AG04450 (cell line): ENCODE measurements at regions of chr7 and their contacts with region 1.

Region 1: GRCh38 chr7:81025360-81025759 is 106.5 kb upstream of the SEMA3C start:
- DNase-seq: no peak
- H3K4me3 ChIP-seq: no peak overlapping the region
- H3K27ac ChIP-seq: no peak overlapping the region
- H3K27me3 ChIP-seq: no peaks in the 10 kb centered on the region
- CTCF ChIP-seq: no peak

Region 2: GRCh38 chr7:80974396-80975334 is 50.7 kb before region 1 on chr7:
- CTCF ChIA-PET with region 1: no interaction called
- POLR2A ChIA-PET with region 1: no interaction called
- DNase-seq: no peak
- H3K4me3 ChIP-seq: no peak overlapping the region
- H3K27ac ChIP-seq: no peak overlapping the region
- H3K27me3 ChIP-seq: no peaks in the 10 kb centered on the region
- CTCF ChIP-seq: no peak

Region 3: GRCh38 chr7:81053623-81054022 is 28.3 kb after region 1 on chr7:
- CTCF ChIA-PET with region 1: no interaction called
- POLR2A ChIA-PET with region 1: no interaction called
- DNase-seq: peak; percentile 7
- H3K4me3 ChIP-seq: no peak overlapping the region
- H3K27ac ChIP-seq: no peak overlapping the region
- H3K27me3 ChIP-seq: no peaks in the 10 kb centered on the region
- CTCF ChIP-seq: 0 out of 2 replicates have a peak, but pooled peaks have one; percentile 9

Region 4: GRCh38 chr7:81114633-81115032 is 89.3 kb after region 1 on chr7:
- CTCF ChIA-PET with region 1: no interaction called
- POLR2A ChIA-PET with region 1: interaction called, 11 read pairs
- DNase-seq: no peak
- H3K4me3 ChIP-seq: no peak overlapping the region
- H3K27ac ChIP-seq: no peak overlapping the region
- H3K27me3 ChIP-seq: no peaks in the 10 kb centered on the region
- CTCF ChIP-seq: no peak